Activated naive CD4-positive, alpha-beta T cell treated with anti-CD3 and anti-CD28 coated beads, Interleukin-2, amount 10 ng/mL, durations not matched to agents 7 days and 5 days (primary cell): ENCODE measurements at regions of chr19 and their contacts with region 1.

Region 1: GRCh38 chr19:35931161-35931873 is 4.9 kb upstream of the LRFN3 start:
- DNase-seq: peak; percentile 100
- H3K4me3 Mint-ChIP-seq: peak overlapping the region; percentile 64
- H3K27ac Mint-ChIP-seq: peak overlapping the region; percentile 95
- H3K4me1 Mint-ChIP-seq: peaks cover 41% of the 10 kb centered on the region
- H3K27me3 Mint-ChIP-seq: no peaks in the 10 kb centered on the region

Region 2: DNA sequence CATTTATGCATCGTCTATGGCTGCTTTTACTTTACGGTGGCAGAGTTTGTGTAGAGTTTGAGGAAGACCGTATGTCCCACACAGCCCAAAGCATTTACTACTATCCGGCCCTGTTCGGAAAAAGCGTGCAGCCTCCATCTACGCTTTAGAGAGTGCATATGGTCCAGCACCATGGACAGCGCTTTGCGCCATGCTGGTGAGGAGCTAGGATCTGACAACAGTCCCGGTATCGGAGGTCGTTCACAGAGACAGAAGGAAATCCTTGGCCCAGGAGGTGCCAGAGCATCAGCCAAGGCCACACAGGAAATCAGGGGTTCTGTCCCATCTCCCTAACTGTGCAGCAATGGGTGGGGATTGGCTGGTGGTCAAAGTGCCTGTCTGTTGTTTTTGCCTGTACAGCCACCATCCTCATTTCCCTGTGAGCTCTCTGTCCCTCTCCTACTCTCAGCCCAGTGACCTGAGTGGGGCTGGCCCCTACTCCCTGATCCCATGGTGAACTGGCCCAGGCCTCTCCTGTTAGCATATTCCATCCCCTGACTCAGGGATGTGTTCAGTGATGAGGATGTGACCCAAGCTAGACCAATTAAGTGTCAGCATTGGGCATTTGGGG is 102.5 kb before region 1 on chr19:
- CTCF ChIA-PET with region 1: no interaction called
- DNase-seq: peak; percentile 83
- H3K4me3 Mint-ChIP-seq: no peak overlapping the region
- H3K27ac Mint-ChIP-seq: no peak overlapping the region
- H3K4me1 Mint-ChIP-seq: no peaks in the 10 kb centered on the region
- H3K27me3 Mint-ChIP-seq: peaks cover 30% of the 10 kb centered on the region

Region 3: GRCh38 chr19:35879770-35880317 is 51.5 kb before region 1 on chr19:
- CTCF ChIA-PET with region 1: interaction called, 86 read pairs
- DNase-seq: peak; percentile 94
- H3K4me3 Mint-ChIP-seq: no peak overlapping the region
- H3K27ac Mint-ChIP-seq: no peak overlapping the region
- H3K4me1 Mint-ChIP-seq: peaks cover 10% of the 10 kb centered on the region
- H3K27me3 Mint-ChIP-seq: peaks cover 41% of the 10 kb centered on the region

Region 4: DNA sequence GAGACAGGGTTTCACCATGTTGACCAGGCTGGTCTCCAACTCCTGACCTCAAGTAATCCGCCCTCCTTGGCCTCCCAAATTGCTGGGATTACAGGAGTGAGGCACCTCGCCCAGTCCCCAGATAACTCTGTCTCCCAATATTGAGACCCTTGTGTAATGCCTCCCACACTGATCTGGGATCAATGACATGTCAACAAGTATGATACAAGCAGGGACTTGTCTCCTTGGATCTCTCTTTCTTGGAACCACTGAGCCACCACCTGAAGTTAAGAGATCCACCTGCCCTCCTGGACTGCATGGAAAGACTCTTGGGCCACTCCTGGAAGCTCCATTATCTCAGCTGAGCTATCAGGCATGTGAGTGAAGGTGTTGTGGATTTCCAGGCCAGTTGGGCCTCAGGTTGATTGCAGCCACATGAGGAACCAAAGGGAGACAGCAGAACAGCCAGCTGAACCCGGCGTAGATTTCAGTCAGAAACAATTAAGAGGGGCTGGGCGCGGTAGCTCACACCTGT is 46.0 kb before region 1 on chr19:
- CTCF ChIA-PET with region 1: interaction called, 86 read pairs
- DNase-seq: no peak
- H3K4me3 Mint-ChIP-seq: no peak overlapping the region
- H3K27ac Mint-ChIP-seq: peak overlapping the region; percentile 76
- H3K4me1 Mint-ChIP-seq: peaks cover 4% of the 10 kb centered on the region
- H3K27me3 Mint-ChIP-seq: peaks cover under 1% of the 10 kb centered on the region